ENCODE measurements at regions of chr2 and their contacts with region 1.

Region 1: DNA sequence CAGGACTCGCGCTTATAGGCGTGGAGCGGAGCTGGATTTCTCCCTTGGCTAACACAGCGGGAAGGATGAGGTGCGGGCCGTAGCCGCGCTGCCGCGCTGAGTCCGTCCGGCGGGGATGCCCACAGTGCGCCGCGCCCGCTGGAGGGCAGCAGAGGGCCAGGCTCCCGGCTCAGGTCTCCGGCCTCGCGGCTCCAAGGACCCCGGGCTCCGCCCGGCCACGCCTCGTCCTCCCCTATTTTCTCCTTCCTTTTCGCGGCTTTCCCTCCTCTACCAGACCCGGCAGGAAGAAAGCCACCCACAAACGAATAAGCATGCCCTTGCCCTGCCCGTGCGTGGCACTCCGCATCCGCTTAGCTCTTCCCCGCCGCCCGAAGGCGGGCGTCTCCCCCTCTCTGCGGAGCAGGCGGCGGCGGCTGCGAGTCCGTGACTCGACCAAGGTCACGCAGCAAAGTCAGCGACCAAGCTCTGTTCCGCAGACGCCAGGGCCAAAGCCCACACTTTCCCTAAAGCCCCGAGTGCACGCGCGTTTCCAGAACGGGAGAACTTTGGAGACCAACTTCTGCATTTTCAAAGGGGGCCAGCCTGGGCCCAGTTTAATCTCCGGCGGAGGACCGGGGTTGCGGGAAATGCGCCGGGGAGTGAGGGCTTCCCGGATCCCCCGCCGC is 48.6 kb downstream of the KCNIP3 start:
- DNase-seq: peak; percentile 84
- H3K4me3 Mint-ChIP-seq: peak overlapping the region; percentile 84
- H3K27ac Mint-ChIP-seq: peak overlapping the region; percentile 53
- H3K4me1 Mint-ChIP-seq: peaks cover 24% of the 10 kb centered on the region
- H3K27me3 Mint-ChIP-seq: no peaks in the 10 kb centered on the region
- CTCF ChIP-seq: peak; percentile 91

Region 2: DNA sequence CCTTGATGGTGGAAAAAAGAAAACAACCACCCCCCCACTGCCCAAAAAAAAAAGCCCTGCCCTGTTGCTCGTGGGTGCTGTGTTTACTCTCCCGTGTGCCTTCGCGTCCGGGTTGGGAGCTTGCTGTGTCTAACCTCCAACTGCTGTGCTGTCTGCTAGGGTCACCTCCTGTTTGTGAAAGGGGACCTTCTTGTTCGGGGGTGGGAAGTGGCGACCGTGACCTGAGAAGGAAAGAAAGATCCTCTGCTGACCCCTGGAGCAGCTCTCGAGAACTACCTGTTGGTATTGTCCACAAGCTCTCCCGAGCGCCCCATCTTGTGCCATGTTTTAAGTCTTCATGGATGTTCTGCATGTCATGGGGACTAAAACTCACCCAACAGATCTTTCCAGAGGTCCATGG is 292.2 kb before region 1 on chr2:
- CTCF ChIA-PET with region 1: no interaction called
- POLR2A ChIA-PET with region 1: no interaction called
- intact Hi-C with region 1: no loop called
- DNase-seq: peak; percentile 10
- H3K4me3 Mint-ChIP-seq: no peak overlapping the region
- H3K27ac Mint-ChIP-seq: no peak overlapping the region
- H3K4me1 Mint-ChIP-seq: no peaks in the 10 kb centered on the region
- H3K27me3 Mint-ChIP-seq: peaks cover 50% of the 10 kb centered on the region
- CTCF ChIP-seq: no peak

Region 3: GRCh38 chr2:95259765-95260417 is 85.8 kb before region 1 on chr2:
- CTCF ChIA-PET with region 1: interaction called, 10 read pairs
- POLR2A ChIA-PET with region 1: no interaction called
- intact Hi-C with region 1: no loop called
- DNase-seq: peak; percentile 82
- H3K4me3 Mint-ChIP-seq: peak overlapping the region; percentile 9
- H3K27ac Mint-ChIP-seq: peak overlapping the region; percentile 71
- H3K4me1 Mint-ChIP-seq: peaks cover 27% of the 10 kb centered on the region
- H3K27me3 Mint-ChIP-seq: no peaks in the 10 kb centered on the region
- CTCF ChIP-seq: no peak

Region 4: GRCh38 chr2:95314964-95315611 is 30.6 kb before region 1 on chr2:
- CTCF ChIA-PET with region 1: interaction called, 30 read pairs
- POLR2A ChIA-PET with region 1: interaction called, 6 read pairs
- intact Hi-C with region 1: no loop called
- DNase-seq: peak; percentile 80
- H3K4me3 Mint-ChIP-seq: peak overlapping the region; percentile 36
- H3K27ac Mint-ChIP-seq: peak overlapping the region; percentile 86
- H3K4me1 Mint-ChIP-seq: peaks cover 52% of the 10 kb centered on the region
- H3K27me3 Mint-ChIP-seq: no peaks in the 10 kb centered on the region
- CTCF ChIP-seq: peak; percentile 83

Region 5: DNA sequence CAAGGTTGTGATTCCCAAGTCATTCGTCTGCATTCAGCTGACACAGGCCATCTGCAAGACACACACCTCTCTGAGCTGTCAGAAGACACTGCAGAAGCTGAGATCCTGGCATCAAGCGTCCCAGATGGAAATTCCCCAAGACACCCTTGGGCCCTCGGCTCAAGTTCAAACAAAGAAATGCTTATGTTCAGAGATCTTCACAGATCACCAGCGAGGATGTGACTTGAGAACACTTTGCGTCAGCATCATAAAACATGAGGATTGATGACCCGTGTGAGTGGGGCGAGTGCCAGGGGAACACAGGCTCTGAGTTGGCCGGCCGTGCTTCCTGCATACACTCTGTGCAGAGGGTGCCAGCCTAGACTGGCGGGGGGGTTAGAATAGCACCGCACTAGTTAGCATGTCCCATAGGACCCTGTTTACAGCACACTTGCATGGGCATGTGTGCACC is 11.8 kb before region 1 on chr2:
- CTCF ChIA-PET with region 1: interaction called, 62 read pairs
- POLR2A ChIA-PET with region 1: interaction called, 49 read pairs
- intact Hi-C with region 1: loop called (anchors 1 kb)
- DNase-seq: peak; percentile 99
- H3K4me3 Mint-ChIP-seq: peak overlapping the region; percentile 52
- H3K27ac Mint-ChIP-seq: peak overlapping the region; percentile 94
- H3K4me1 Mint-ChIP-seq: peaks cover 44% of the 10 kb centered on the region
- H3K27me3 Mint-ChIP-seq: no peaks in the 10 kb centered on the region
- CTCF ChIP-seq: no peak

Region 6: GRCh38 chr2:95728878-95729596 is 383.3 kb after region 1 on chr2:
- CTCF ChIA-PET with region 1: interaction called, 11 read pairs
- POLR2A ChIA-PET with region 1: no interaction called
- intact Hi-C with region 1: loop called (anchors 5 kb)
- DNase-seq: peak; percentile 73
- H3K4me3 Mint-ChIP-seq: no peak overlapping the region
- H3K27ac Mint-ChIP-seq: no peak overlapping the region
- H3K4me1 Mint-ChIP-seq: no peaks in the 10 kb centered on the region
- H3K27me3 Mint-ChIP-seq: peaks cover 17% of the 10 kb centered on the region
- CTCF ChIP-seq: peak; percentile 73